Posterior vena cava (tissue), 2 donors: ENCODE measurements at regions of chr15 and their contacts with region 1.

Region 1: GRCh38 chr15:59941612-59942011 is 62.5 kb upstream of the FOXB1 start:
- DNase-seq: no peak

Region 2: DNA sequence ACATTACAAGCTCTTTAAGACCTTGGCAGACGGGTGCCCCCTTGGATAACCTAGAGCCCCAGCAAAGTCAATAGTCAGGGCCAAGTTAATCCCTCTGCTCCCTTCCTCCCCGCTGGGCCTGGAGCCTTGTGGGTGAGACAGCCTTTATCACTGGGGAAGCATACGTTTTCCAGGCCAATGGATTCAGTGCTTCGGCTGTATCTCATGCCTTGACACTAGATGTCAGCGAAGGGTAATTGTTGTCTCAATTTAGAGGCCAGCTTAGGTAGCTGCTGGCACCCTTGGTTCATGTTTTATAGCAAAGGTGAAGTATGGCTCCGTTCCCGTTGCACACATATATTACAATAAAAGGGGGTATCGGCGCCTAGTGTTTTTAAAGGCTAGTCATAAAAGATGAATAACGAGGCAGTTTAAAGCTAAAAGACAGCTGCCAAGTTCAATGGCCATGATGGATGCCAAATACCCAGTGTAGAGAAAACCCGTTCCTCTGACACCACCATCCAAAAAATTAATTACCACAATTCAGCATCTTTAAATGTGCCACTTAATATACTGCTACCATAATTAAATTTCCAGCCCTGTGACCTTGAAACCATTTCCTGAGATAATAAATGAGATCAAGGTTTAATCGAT is 200.2 kb before region 1 on chr15:
- intact Hi-C with region 1: no loop called
- DNase-seq: no peak

Region 3: GRCh38 chr15:59966262-59966661 is 24.6 kb after region 1 on chr15:
- intact Hi-C with region 1: no loop called
- DNase-seq: no peak

Region 4: GRCh38 chr15:60026555-60026954 is 84.9 kb after region 1 on chr15:
- intact Hi-C with region 1: loop called in 1 of 2 experiments (anchors 5 kb)
- DNase-seq: no peak